PC-9 (cell line): ENCODE measurements at regions of chr14 and their contacts with region 1.

Region 1: GRCh38 chr14:76413962-76414625 is 38.2 kb downstream of the ESRRB start:
- DNase-seq: no peak
- H3K4me3 ChIP-seq: no peak overlapping the region
- H3K27ac ChIP-seq: no peak overlapping the region
- H3K4me1 ChIP-seq: no peaks in the 10 kb centered on the region
- H3K27me3 ChIP-seq: peaks cover 93% of the 10 kb centered on the region
- CTCF ChIP-seq: no peak

Region 2: GRCh38 chr14:76375947-76376404 is 38.1 kb before region 1 on chr14 and contains the start of gene ESRRB:
- CTCF ChIA-PET with region 1: no interaction called
- POLR2A ChIA-PET with region 1: no interaction called
- intact Hi-C with region 1: no loop called
- DNase-seq: no peak
- H3K4me3 ChIP-seq: no peak within 1 kb of the TSS
- H3K27ac ChIP-seq: no peak within 1 kb of the TSS
- H3K4me1 ChIP-seq: no peaks in the 10 kb centered on the region
- H3K27me3 ChIP-seq: peaks cover 98% of the 10 kb centered on the region
- CTCF ChIP-seq: no peak
- total RNA-seq, gene ESRRB: not detected in 2 replicates

Region 3: GRCh38 chr14:76467711-76468155 is 53.6 kb after region 1 on chr14:
- CTCF ChIA-PET with region 1: no interaction called
- POLR2A ChIA-PET with region 1: interaction called, 20 read pairs
- intact Hi-C with region 1: no loop called
- DNase-seq: no peak
- H3K4me3 ChIP-seq: no peak overlapping the region
- H3K27ac ChIP-seq: no peak overlapping the region
- H3K4me1 ChIP-seq: no peaks in the 10 kb centered on the region
- H3K27me3 ChIP-seq: peaks cover 98% of the 10 kb centered on the region
- CTCF ChIP-seq: no peak

Region 4: GRCh38 chr14:76615331-76615730 is 201.2 kb after region 1 on chr14:
- CTCF ChIA-PET with region 1: no interaction called
- POLR2A ChIA-PET with region 1: no interaction called
- intact Hi-C with region 1: no loop called
- DNase-seq: no peak
- H3K4me3 ChIP-seq: no peak overlapping the region
- H3K27ac ChIP-seq: no peak overlapping the region
- H3K4me1 ChIP-seq: no peaks in the 10 kb centered on the region
- H3K27me3 ChIP-seq: peaks cover 73% of the 10 kb centered on the region
- CTCF ChIP-seq: no peak